Left ventricle myocardium inferior (tissue), 1 donor: ENCODE measurements at regions of chr5 and their contacts with region 1.

Region 1: DNA sequence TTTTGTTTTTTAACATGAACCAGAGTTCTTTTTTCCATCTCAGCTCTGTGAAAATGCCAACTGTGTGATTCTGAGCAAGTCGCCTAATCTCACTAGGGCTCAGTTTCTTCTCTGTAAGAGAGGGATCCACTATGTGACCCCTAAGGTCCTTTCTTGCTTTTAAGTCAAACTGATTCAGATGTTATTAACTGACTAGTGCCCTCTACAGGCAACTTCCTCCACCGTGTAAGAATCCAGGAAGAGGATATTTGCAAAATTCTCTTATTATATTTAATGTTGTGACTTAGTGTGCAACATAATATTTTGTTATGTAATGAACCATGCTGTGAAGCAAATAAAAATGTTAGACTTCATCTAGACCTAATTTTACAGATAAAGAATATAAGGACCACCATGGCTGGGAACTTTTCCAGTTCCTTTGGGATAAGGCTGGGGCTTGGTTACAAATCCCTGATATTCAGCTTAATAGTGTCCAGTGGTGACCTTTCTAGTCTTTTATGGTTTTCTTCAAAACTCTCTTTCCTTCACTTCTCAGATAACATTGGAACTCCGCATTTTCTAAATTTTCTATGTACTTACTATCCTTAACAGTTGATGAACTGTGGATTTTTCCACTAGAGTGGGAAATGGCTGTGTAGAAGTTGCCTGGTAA is 244.7 kb downstream of the PIK3R1 start:
- DNase-seq: no peak
- H3K4me3 ChIP-seq: no peak overlapping the region
- H3K27ac ChIP-seq: no peak overlapping the region
- H3K4me1 ChIP-seq: peaks cover 26% of the 10 kb centered on the region
- H3K27me3 ChIP-seq: no peaks in the 10 kb centered on the region
- CTCF ChIP-seq: peak; percentile 83

Region 2: DNA sequence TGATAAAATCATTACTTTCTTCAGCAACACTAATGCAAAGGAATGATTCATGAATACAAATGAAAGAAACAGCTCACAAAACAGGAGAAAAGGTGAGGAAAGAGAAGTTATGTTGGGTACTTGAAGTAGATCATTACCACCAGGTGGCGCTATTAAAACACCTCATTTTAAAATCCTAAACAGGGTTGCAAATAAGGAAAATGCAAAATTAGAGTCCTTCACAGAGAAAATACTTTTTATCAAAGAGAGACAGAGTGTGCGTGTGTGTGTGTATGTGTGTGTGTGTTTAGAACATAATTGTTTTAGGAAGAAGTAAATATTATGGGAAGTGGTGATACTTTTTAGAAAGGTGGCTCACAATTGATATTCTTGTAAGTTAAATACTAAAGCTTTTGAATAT is 1214.2 kb before region 1 on chr5:
- intact Hi-C with region 1: loop called (anchors 10 kb)
- DNase-seq: no peak
- H3K4me3 ChIP-seq: no peak overlapping the region
- H3K27ac ChIP-seq: peak overlapping the region; percentile 43
- H3K4me1 ChIP-seq: peaks cover 43% of the 10 kb centered on the region
- H3K27me3 ChIP-seq: no peaks in the 10 kb centered on the region
- CTCF ChIP-seq: peak; percentile 78

Region 3: DNA sequence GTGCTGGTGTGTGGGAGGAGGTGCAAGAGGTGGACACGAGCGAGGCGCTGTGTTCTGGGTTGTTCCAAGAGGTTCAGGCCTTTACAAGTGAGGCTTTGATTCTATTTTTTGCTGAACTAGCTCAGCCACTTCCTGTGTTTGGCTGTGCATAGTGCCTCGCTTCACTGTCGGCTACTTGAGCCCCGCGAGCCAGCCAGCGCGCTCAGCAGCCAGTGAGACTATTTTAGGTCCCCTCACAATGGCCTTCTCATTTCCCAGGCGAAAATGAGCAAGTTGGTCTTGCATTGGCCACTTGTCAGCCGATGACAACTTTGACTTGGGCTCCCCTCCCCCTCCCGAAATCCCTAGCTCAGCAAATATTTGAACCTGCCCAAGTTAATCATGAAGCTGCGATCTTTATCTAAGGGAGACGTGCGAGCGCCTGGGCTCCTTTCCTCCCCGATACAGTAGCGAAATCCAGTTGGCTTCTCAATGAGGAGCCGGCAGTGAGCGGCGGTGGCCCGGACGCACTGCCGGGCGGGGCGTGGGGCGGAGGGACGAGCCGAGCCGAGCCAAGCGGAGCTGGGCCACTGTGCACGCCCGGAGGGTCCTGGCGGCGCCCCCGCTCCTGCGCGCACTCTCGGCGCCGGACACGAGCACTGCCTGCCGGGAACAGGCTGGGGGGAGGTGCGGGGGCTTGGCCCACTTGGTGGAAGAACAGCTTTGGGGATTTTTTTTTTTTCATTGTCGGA is 172.1 kb before region 1 on chr5:
- intact Hi-C with region 1: loop called (anchors 5 kb)
- DNase-seq: peak; percentile 76
- H3K4me3 ChIP-seq: peak overlapping the region; percentile 71
- H3K27ac ChIP-seq: peak overlapping the region; percentile 94
- H3K4me1 ChIP-seq: peaks cover 93% of the 10 kb centered on the region
- H3K27me3 ChIP-seq: no peaks in the 10 kb centered on the region
- CTCF ChIP-seq: no peak

Region 4: GRCh38 chr5:68612972-68613371 is 152.7 kb after region 1 on chr5:
- intact Hi-C with region 1: no loop called
- DNase-seq: no peak
- H3K4me3 ChIP-seq: no peak overlapping the region
- H3K27ac ChIP-seq: no peak overlapping the region
- H3K4me1 ChIP-seq: no peaks in the 10 kb centered on the region
- H3K27me3 ChIP-seq: no peaks in the 10 kb centered on the region
- CTCF ChIP-seq: no peak